Mammary epithelial cell (primary cell): ENCODE measurements at regions of chr10 and their contacts with region 1.

Region 1: DNA sequence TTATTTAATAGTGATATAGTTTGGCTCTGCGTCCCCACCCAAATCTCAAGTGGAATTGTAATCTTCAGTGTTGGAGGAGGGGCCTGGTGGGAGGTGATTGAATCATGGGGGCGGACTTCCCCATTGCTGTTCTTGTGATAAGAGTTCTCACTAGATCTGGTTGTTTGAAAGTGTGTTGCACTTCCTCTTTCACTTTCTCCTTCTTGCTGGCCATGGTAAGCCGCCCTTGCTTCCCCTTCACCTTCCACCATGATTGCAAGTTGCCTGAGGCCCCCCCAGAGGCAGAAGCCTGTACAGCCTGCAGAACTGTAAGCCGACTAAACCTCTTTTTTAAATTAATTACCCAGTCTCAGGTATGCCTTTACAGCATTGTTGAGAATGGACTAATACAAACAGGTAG is 101.4 kb downstream of the MTPAP start:
- DNase-seq: no peak
- H3K4me3 ChIP-seq: no peak overlapping the region
- H3K27ac ChIP-seq: no peak overlapping the region
- H3K4me1 ChIP-seq: no peaks in the 10 kb centered on the region
- H3K27me3 ChIP-seq: peaks cover 3% of the 10 kb centered on the region
- CTCF ChIP-seq: no peak

Region 2: GRCh38 chr10:30013757-30014156 is 233.9 kb before region 1 on chr10:
- CTCF ChIA-PET with region 1: no interaction called
- dilution Hi-C with region 1: loop called (anchors 10 kb)
- in situ Hi-C with region 1: loop called in 1 of 2 experiments (anchors 25 kb)
- intact Hi-C with region 1: no loop called
- DNase-seq: no peak
- H3K4me3 ChIP-seq: no peak overlapping the region
- H3K27ac ChIP-seq: no peak overlapping the region
- H3K4me1 ChIP-seq: no peaks in the 10 kb centered on the region
- H3K27me3 ChIP-seq: peaks cover 8% of the 10 kb centered on the region
- CTCF ChIP-seq: no peak